ENCODE measurements at regions of chr9 and their contacts with region 1.

Region 1: DNA sequence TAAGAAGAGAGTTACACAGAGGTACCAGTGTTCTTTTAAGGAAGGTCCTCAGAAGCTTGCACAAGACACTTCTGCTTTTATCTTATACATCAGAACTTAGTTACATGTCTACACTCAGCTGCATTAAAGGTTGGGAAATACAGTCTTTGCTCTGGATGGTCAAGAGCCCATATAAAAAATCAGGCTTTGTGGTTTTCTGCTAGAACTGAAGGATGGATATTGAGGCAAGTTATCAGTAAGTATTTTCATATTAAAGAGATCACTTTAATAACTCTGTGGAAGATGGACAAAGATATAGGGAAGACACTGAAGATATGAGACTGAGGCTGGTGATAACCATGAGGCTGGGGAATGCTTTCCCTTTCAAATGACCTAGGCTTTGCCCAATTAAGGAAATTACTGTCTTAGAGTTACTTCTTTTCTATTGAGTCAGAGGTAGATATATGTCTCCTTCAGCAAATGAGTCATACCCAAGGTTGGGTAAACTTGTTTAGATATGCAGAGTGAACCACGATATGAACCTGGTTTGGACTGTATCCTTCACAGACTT is 87.0 kb upstream of the TNC start:
- DNase-seq: peak; percentile 95
- ATAC-seq: peak; percentile 64
- H3K4me3 ChIP-seq: no peak overlapping the region
- H3K27ac ChIP-seq: peak overlapping the region; percentile 88
- H3K4me1 ChIP-seq: peaks cover 28% of the 10 kb centered on the region
- H3K27me3 ChIP-seq: no peaks in the 10 kb centered on the region
- CTCF ChIP-seq: no peak
- POLR2A ChIP-seq: no peak
- RAD21 ChIP-seq: no peak

Region 2: GRCh38 chr9:115035841-115036612 is 169.0 kb before region 1 on chr9:
- CTCF ChIA-PET with region 1: no interaction called
- POLR2A ChIA-PET with region 1: no interaction called
- dilution Hi-C with region 1: no loop called
- in situ Hi-C with region 1: no loop called
- intact Hi-C with region 1: loop called (anchors 5 kb)
- DNase-seq: peak; percentile 86
- ATAC-seq: peak; percentile 51
- H3K4me3 ChIP-seq: no peak overlapping the region
- H3K27ac ChIP-seq: peak overlapping the region; percentile 79; the same call in 1 of the 2 replicates
- H3K4me1 ChIP-seq: peaks cover 19% of the 10 kb centered on the region
- H3K27me3 ChIP-seq: no peaks in the 10 kb centered on the region
- CTCF ChIP-seq: no peak
- POLR2A ChIP-seq: no peak
- RAD21 ChIP-seq: no peak

Region 3: DNA sequence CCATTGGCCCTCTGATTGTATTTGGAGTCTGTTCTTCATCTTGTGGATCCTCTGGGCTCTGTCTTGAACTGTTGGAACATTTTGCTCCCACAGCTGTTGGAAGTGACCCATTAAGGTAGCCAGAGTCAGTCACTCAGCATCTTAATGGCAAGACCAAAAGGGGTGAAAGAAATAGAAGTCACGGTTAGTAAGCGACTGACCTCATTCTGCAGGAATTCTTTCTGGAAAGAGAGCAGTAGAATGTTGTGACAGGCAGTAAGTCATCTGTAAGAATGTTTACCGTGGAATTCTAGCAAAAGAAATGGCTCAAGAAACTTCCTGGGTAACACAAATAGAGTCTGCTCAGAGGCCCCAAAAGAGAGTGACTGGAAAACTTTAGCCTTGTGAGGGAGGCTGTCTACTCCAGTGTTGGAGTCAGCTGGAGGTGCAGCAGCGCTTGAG is 58.4 kb before region 1 on chr9:
- CTCF ChIA-PET with region 1: interaction called, 4 read pairs
- POLR2A ChIA-PET with region 1: interaction called, 4 read pairs
- dilution Hi-C with region 1: no loop called
- in situ Hi-C with region 1: no loop called
- intact Hi-C with region 1: loop called (anchors 5 kb)
- DNase-seq: peak; percentile 96
- ATAC-seq: peak; percentile 89
- H3K4me3 ChIP-seq: no peak overlapping the region
- H3K27ac ChIP-seq: peak overlapping the region; percentile 93
- H3K4me1 ChIP-seq: peaks cover 27% of the 10 kb centered on the region
- H3K27me3 ChIP-seq: no peaks in the 10 kb centered on the region
- CTCF ChIP-seq: no peak
- POLR2A ChIP-seq: no peak
- RAD21 ChIP-seq: no peak; the same call in 1 of the 2 replicates

Region 4: DNA sequence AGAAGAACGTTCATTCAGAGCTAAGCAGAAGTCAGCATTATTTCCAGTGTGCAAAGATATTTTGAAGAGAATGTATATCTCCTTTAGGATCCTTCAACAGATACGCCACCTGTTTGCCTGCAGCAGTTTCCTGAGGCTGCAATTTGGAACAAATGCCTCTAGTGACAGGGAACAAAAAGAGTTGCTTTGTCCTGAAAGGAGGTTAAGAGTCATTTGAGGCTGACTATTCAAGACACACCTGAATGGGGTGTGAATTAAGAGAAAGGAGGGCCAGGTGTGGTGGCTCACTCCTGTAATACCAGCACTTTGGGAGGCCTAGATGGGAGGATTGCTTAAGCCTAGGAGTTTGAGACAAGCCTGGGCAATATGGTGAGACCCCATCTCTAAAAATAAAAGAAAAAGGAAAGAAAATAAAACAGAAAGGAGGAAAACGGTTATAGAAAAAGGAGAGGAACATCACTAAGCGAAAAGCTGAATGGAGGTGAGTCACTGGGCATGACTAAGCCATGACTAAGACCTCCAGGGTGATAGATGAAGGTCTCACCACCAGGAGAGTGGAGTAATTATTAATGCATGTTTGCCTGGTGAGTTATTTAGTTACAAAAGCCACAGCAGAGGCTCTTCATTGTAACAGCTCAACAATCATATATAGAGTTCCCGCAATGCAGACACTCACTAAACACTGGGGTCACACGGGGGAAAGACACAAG is 168.2 kb after region 1 on chr9:
- CTCF ChIA-PET with region 1: no interaction called
- POLR2A ChIA-PET with region 1: no interaction called
- dilution Hi-C with region 1: no loop called
- in situ Hi-C with region 1: no loop called
- intact Hi-C with region 1: loop called (anchors 10 kb)
- DNase-seq: peak; percentile 98
- ATAC-seq: peak; percentile 81
- H3K4me3 ChIP-seq: no peak overlapping the region
- H3K27ac ChIP-seq: peak overlapping the region; percentile 86
- H3K4me1 ChIP-seq: peaks cover 10% of the 10 kb centered on the region
- H3K27me3 ChIP-seq: no peaks in the 10 kb centered on the region
- CTCF ChIP-seq: no peak
- POLR2A ChIP-seq: no peak
- RAD21 ChIP-seq: no peak; the same call in 1 of the 2 replicates